ENCODE measurements at regions of chr7 and their contacts with region 1.

Region 1: DNA sequence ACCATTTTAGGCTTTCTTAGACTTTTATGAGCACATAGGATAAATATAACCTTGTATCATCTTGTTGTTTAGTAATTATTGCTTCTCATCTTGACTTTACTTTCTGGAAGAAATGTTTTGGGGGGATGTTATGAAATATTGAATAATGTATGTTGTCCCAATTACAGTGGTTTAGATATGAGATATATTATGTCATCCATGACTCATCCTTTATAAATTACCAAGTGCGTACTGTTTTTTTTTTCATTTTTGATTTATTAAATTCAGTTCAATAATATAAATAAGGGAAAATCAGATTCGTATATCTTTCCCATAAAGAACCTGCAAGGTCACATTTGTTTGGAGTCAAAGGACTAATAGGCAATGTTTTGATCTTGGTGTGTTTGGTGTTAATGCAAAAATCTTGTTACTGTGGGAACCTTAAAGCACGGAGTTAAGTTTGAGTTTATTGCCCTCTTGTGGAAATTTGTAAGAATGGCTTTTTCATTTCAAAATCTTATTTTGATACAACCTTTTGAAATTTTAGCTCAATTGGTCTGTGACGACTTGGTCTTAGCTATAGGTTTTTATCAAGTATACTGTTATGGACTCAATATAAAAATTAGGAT is 108.6 kb downstream of the SRI start:
- DNase-seq: no peak
- H3K4me3 ChIP-seq: no peak overlapping the region
- H3K27ac ChIP-seq: no peak overlapping the region
- H3K4me1 ChIP-seq: peaks cover 10% of the 10 kb centered on the region
- H3K27me3 ChIP-seq: no peaks in the 10 kb centered on the region
- CTCF ChIP-seq: peak in 1 of 3 experiments; percentile 50
- POLR2A ChIP-seq: no peak

Region 2: GRCh38 chr7:87876040-87876868 is 235.0 kb before region 1 on chr7 and contains the starts of genes DBF4 and SLC25A40:
- intact Hi-C with region 1: loop called (anchors 10 kb)
- DNase-seq: peak in 1 of 2 donors; percentile 97
- H3K4me3 ChIP-seq: peak within 1 kb of the TSS; percentile 65 to 83
- H3K27ac ChIP-seq: peak within 1 kb of the TSS; percentile 96
- H3K4me1 ChIP-seq: peaks cover 27% of the 10 kb centered on the region
- H3K27me3 ChIP-seq: no peaks in the 10 kb centered on the region
- CTCF ChIP-seq: no peak
- POLR2A ChIP-seq: peak in 1 of 2 donors; percentile 63
- total RNA-seq, gene DBF4: 8.3 TPM
- total RNA-seq, gene SLC25A40: 30.0 TPM